ENCODE measurements at regions of chr3 and their contacts with region 1.

Region 1: DNA sequence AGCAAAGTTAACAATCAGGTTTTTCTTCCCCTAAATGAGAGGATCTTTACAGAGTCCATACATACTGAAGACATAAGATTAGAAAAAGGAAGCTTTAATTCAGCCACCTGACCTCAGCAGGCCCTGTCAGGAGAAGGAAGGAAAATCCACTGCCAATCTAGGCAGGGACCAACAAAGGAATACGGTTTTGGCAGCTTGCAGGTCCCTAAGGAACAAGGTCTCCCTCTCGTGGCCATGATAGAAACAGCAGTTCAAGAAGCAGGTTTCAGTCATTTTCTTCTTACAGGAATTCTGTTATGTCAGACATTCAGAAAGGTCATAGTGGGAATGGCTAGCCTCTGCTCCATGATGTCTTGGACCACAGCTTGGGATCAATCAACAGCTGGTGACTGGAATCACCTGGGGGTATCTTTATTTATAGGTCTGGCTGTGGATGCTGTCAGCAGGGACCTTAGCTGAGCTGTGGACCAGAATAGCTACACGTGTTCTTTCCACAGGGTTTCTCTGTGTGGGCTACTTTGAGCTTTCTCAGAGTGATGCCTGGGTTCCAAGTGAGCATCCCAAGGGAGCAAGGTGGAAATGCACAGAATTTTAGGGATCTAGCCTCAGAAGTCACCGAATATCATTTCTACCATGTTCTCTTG is 9.4 kb upstream of the CMSS1 start:
- DNase-seq: peak; percentile 71
- H3K4me3 ChIP-seq: no peak overlapping the region
- H3K27ac ChIP-seq: no peak overlapping the region
- H3K27me3 ChIP-seq: no peaks in the 10 kb centered on the region
- CTCF ChIP-seq: peak; percentile 93

Region 2: DNA sequence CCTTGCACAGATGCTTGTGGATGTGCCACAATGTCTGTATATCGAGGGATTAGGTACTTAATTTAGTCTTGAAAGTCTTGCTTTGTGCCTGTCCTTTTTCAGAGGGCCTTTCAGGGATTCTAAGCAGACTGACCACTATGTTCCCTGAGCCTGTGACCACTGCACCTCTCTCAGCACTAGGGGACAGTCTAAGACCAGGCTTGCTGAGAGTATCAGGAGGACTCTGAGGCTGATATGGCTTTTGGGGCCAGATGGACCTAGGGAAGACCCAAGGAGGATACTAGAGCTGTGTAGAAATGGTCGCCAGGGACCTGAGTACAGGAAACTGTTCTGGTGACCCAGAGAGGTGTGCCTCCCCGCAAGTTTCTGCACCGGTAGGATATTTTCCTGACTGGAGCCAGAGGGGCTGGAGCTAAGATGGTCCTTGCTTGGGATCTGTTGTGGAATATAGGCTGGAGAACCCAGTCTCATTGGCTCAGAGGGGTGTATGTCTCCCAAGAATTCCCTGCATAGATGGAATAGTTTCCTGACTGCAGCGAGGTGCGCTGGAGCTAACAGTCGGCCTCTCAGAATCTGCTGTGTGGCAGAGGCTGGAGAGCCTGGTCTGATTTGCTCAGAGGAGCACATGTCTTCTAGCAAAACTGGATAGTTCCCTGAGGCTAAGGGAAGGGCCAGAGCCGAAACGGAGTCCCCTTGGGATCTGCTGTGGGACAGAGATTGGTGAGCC is 693.5 kb before region 1 on chr3:
- CTCF ChIA-PET with region 1: interaction called, 15 read pairs
- POLR2A ChIA-PET with region 1: no interaction called
- DNase-seq: peak; percentile 16
- H3K4me3 ChIP-seq: no peak overlapping the region
- H3K27ac ChIP-seq: no peak overlapping the region
- H3K27me3 ChIP-seq: no peaks in the 10 kb centered on the region
- CTCF ChIP-seq: peak; percentile 91